ENCODE measurements at regions of chr3 and their contacts with region 1.

Region 1: GRCh38 chr3:159839561-159840379 is 148.9 kb upstream of the IL12A start:
- DNase-seq: peak; percentile 81

Region 2: GRCh38 chr3:159804726-159805410 is 34.9 kb before region 1 on chr3:
- intact Hi-C with region 1: no loop called
- DNase-seq: no peak

Region 3: GRCh38 chr3:159852821-159853505 is 13.2 kb after region 1 on chr3:
- intact Hi-C with region 1: loop called (anchors 2 kb)
- DNase-seq: peak; percentile 91

Region 4: DNA sequence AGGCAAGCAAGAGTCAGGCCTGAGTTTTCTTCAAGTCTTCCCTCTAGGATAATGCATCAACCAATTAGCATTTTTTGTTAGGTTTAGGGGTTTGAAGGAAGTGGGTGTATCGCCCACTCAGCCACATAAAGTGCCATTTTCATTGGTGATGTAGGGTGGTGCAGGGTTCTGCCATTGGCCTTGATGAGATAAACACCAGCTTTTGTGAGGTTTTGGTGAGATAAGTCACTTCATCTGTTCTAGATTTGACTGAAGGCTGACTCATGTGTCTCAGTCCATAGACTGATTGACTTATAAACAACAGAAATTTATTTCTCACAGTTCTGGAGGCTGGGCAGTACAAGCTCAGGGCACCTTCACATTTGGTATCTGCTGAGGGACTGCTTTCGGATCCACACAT is 301.0 kb after region 1 on chr3:
- intact Hi-C with region 1: no loop called
- DNase-seq: no peak

Region 5: GRCh38 chr3:160399125-160400029 is 559.6 kb after region 1 on chr3 and contains the starts of genes IFT80 and SMC4:
- intact Hi-C with region 1: loop called (anchors 10 kb)
- DNase-seq: peak; percentile 99
- total RNA-seq, gene IFT80: 10.7 TPM
- total RNA-seq, gene SMC4: 17.5 TPM